ENCODE measurements at regions of chr12 and their contacts with region 1.

Region 1: GRCh38 chr12:15882118-15882971 is at the start of gene STRAP:
- DNase-seq: peak; percentile 95
- H3K4me3 Mint-ChIP-seq: peak within 1 kb of the TSS; percentile 93
- H3K27ac Mint-ChIP-seq: peak within 1 kb of the TSS; percentile 96
- H3K4me1 Mint-ChIP-seq: peaks cover 35% of the 10 kb centered on the region
- H3K27me3 Mint-ChIP-seq: no peaks in the 10 kb centered on the region
- total RNA-seq, gene STRAP: 144 TPM in 2 replicates

Region 2: DNA sequence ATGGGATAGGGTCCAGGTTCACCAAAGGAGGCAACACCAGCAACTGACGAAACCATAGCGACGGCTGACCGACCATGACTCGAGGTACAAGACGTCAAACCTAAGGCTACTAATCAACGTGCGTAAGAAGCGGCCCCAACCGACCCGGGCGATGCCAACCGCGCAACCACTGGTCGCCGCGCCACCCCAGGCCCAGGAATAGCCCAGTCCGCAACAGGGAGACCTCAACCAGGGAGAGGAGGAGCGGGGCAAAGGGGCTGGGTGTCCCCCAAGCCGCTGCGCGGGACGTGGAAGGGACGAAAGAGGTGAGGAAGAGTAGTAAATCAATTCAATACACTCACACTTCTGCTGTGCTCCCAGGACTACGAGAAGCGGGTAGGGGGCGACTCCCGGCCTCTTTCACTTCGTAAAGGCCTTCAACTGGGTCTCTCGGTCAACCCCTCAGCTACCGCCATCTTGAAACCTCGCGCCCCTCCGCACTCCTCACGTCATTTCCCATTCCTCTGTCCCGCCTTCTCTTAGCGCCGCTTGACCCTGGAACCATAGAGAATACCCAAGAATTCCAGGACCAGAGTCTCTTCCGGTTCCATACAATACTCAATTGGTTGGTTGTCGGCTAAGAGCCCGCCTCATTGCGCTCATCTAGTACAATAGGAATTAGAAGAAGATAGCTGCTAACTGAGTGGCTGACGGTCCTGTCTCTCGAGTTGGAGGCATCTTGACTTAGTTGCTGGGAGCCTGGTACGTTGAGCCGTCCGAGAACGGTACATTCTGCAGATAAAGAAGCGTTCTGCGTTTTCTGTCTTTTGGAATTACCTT is 1079.1 kb before region 1 on chr12 and contains the starts of genes C12orf60 and WBP11:
- intact Hi-C with region 1: loop called (anchors 1 kb)
- DNase-seq: peak; percentile 83
- H3K4me3 Mint-ChIP-seq: no peak within 1 kb of the TSS
- H3K27ac Mint-ChIP-seq: no peak within 1 kb of the TSS
- H3K4me1 Mint-ChIP-seq: peaks cover 27% of the 10 kb centered on the region
- H3K27me3 Mint-ChIP-seq: no peaks in the 10 kb centered on the region
- total RNA-seq, gene C12orf60: 2.2 and 2.8 TPM in 2 replicates
- total RNA-seq, gene WBP11: 128 and 134 TPM in 2 replicates

Region 3: DNA sequence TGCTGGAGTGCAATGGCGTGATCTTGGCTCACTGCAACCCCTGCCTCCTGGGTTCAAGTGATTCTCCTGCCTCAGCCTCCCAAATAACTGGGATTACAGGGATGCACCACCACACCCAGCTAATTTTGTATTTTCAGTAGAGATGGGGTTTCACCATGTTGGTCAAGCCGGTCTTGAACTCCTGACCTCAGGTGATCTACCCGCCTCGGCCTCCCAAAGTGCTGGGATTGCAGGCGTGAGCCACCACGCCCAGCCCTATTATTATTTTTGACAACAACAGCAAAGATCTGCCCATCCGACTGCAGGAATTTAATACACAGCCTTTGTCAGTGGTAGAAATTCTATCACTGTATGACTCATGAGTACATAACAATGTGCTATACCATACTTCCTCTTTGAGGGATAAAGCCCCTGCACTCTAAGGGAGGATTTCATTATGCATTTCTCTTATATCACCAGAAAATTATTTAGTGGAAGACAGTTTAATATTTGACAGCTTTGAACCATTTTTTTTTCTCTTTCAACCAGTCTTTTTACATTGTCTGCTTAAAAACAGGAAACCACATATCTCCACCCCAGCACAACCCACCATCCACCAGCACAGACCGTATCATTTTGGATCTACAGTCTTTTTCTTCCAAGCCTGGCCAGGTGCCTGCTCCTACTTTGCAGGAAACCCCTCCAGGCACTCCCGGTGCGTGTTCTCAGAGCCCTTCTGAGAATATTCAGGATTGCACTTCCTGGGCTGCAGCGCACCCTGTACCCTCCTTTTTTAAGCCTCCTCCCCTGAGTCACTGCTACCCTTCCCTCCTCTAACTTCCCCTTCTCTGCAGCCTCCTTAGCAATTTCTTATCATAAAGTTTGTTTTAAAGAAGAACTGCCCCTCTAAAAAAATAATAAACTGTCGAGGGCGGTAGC is 921.5 kb before region 1 on chr12:
- intact Hi-C with region 1: loop called (anchors 5 kb)
- DNase-seq: peak; percentile 43
- H3K4me3 Mint-ChIP-seq: peak overlapping the region; percentile 96
- H3K27ac Mint-ChIP-seq: peak overlapping the region; percentile 97
- H3K4me1 Mint-ChIP-seq: peaks cover 58% of the 10 kb centered on the region
- H3K27me3 Mint-ChIP-seq: no peaks in the 10 kb centered on the region

Region 4: DNA sequence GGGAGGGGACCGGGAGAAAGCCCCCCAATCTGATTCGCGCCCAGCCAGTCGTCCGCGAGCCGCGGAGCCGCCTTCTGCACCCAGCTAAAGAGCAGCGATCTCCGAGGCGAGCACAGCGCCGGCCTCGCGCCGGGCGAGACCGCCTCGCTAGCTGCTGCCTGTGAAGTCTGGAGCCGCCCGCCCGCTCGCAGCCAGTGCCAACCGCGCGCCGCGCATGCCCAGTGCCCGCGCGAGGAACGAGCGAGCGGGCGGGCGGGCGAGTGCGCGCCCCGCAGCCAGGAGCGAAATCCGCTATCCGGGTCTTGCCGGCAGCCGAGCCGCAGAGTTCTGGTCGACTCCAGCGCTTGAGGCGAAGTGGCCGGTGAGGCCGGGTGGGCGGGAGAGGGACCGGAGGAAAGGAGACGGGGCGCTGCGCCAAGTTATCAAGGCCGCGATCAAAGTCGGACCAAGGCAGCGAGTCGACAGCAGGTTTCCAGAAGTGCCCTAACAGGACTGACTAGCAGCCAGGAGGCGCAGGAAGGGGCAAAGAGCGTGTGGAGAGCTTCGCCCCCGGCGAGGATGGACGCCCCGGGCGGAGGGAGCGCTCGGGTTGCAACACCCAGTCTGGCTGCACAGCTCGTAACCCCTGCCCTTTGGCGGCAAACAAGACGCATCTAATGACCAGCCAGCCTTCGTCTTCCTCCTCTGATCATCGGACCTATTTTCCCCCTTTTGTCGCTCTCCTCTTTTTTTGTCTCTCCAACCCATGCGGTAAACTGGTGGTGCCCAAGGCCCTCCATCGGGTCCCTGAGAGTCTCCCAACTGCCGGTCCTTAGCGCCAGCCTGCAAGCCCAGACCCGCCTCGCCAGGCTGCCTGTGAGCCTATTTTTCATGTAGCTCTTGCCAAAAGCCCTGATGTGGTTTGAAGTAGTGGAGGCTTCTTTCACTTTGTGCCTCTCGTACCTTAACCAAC is 92.8 kb before region 1 on chr12 and contains the start of gene EPS8:
- intact Hi-C with region 1: loop called (anchors 10 kb)
- DNase-seq: peak; percentile 84
- H3K4me3 Mint-ChIP-seq: peak within 1 kb of the TSS; percentile 76
- H3K27ac Mint-ChIP-seq: peak within 1 kb of the TSS; percentile 24
- H3K4me1 Mint-ChIP-seq: peaks cover 16% of the 10 kb centered on the region
- H3K27me3 Mint-ChIP-seq: peaks cover 63% of the 10 kb centered on the region
- total RNA-seq, gene EPS8: 2.7 and 2.8 TPM in 2 replicates

Region 5: GRCh38 chr12:15899282-15899870 is 17.0 kb after region 1 on chr12:
- intact Hi-C with region 1: loop called (anchors 2 kb)
- DNase-seq: no peak
- H3K4me3 Mint-ChIP-seq: no peak overlapping the region
- H3K27ac Mint-ChIP-seq: no peak overlapping the region
- H3K4me1 Mint-ChIP-seq: peaks cover 7% of the 10 kb centered on the region
- H3K27me3 Mint-ChIP-seq: no peaks in the 10 kb centered on the region

Region 6: GRCh38 chr12:15910864-15911721 is 28.7 kb after region 1 on chr12 and contains the start of gene DERA:
- intact Hi-C with region 1: loop called (anchors 1 kb)
- DNase-seq: peak; percentile 50
- H3K4me3 Mint-ChIP-seq: peak within 1 kb of the TSS; percentile 86
- H3K27ac Mint-ChIP-seq: peak within 1 kb of the TSS; percentile 76
- H3K4me1 Mint-ChIP-seq: peaks cover 20% of the 10 kb centered on the region
- H3K27me3 Mint-ChIP-seq: no peaks in the 10 kb centered on the region
- total RNA-seq, gene DERA: 21.4 and 21.9 TPM in 2 replicates

Measured in activated T-helper 2 cell treated with anti-CD3 and anti-CD28 coated beads, Interferon-gamma antibody, Interleukin-2, Interleukin-4, amounts not matched to agents 10 μg/mL and 5 μg/mL and 100 μg/mL, durations not matched to agents 14 hours and 24 hours and 36 hours (primary cell).